ENCODE measurements at regions of chr13 and their contacts with region 1.

Region 1: GRCh38 chr13:95660981-95661581 is 15.9 kb upstream of the DNAJC3 start:
- DNase-seq: peak; percentile 51
- ATAC-seq: peak; percentile 34; the same call in 1 of the 3 replicates
- H3K4me3 ChIP-seq: no peak overlapping the region
- H3K27ac ChIP-seq: no peak overlapping the region
- H3K4me1 ChIP-seq: no peaks in the 10 kb centered on the region
- H3K27me3 ChIP-seq: no peaks in the 10 kb centered on the region; a peak in 1 of 5 replicates
- CTCF ChIP-seq: peak; percentile 53
- EP300 ChIP-seq: no peak
- POLR2A ChIP-seq: no peak
- RAD21 ChIP-seq: no peak

Region 2: GRCh38 chr13:95150555-95150954 is 510.5 kb before region 1 on chr13:
- CTCF ChIA-PET with region 1: no interaction called
- POLR2A ChIA-PET with region 1: no interaction called
- in situ Hi-C with region 1: no loop called
- intact Hi-C with region 1: no loop called
- DNase-seq: peak; percentile 7
- ATAC-seq: peak; percentile 60
- H3K4me3 ChIP-seq: no peak overlapping the region
- H3K27ac ChIP-seq: no peak overlapping the region
- H3K4me1 ChIP-seq: peaks cover 29% of the 10 kb centered on the region
- H3K27me3 ChIP-seq: no peaks in the 10 kb centered on the region
- CTCF ChIP-seq: no peak
- EP300 ChIP-seq: no peak
- POLR2A ChIP-seq: no peak
- RAD21 ChIP-seq: no peak

Region 3: DNA sequence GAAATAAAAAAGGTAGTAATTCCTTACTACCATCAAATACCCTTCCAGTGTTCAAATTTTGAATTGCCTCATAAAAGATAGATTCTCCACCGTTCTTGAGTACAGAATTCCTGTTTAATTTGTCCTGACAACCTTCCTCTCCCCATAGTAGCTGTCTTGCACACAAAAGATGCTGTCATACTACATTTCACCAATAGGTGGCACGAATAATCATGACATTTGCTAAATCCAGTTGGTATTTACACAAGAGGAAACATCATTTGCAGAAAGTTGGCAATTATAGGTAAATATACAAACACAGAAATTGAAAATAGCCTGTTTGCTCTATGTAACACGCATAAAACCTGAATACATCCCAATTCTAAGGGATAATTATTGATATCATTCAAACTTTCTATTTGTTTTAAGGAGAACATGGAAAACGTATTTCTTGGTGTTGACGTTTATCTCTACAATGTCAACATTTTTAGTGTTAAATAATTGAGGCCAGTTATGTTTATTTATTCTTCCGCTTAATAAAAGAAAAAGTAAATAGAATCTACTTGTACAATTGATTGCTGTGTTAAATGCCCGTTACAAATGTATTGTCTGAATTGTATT is 166.9 kb before region 1 on chr13:
- CTCF ChIA-PET with region 1: interaction called, 3 read pairs
- POLR2A ChIA-PET with region 1: no interaction called
- in situ Hi-C with region 1: no loop called
- intact Hi-C with region 1: loop called (anchors 1 kb)
- DNase-seq: peak; percentile 55
- ATAC-seq: peak; percentile 70
- H3K4me3 ChIP-seq: no peak overlapping the region
- H3K27ac ChIP-seq: no peak overlapping the region
- H3K4me1 ChIP-seq: no peaks in the 10 kb centered on the region
- H3K27me3 ChIP-seq: no peaks in the 10 kb centered on the region
- CTCF ChIP-seq: peak; percentile 68
- EP300 ChIP-seq: no peak
- POLR2A ChIP-seq: no peak
- RAD21 ChIP-seq: peak; percentile 28; the same call in 1 of the 2 replicates

Region 4: DNA sequence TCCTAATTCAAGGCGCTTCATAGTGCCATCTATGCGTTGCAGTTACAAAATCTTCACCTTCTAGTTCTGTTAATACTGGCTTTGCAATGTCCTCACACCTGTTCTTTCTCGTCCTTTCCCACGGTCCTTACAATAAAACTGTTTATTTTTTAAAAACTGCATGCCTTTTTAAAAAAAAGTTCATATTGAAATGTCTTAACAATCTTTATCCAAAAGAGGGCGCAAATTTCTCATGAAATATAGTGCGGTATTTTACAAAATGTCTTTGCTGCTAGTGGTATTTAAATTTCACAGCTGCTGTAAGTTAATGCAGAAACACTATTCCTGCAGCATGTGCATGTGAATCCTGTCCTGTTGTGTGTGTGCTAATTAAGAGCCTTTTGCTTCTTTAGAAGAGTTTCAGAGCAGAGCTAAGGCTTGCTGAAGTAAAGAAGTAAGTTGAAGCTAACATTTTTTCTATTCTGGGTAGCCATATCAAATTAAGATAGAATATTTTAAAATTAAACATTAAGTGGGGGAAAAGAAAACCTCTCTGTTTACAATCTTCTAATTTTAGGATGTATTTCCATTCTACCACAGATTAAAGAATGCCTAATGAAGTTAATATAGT is 124.3 kb before region 1 on chr13:
- CTCF ChIA-PET with region 1: no interaction called
- POLR2A ChIA-PET with region 1: no interaction called
- in situ Hi-C with region 1: no loop called
- intact Hi-C with region 1: loop called (anchors 5 kb)
- DNase-seq: no peak
- ATAC-seq: no peak
- H3K4me3 ChIP-seq: no peak overlapping the region
- H3K27ac ChIP-seq: no peak overlapping the region
- H3K4me1 ChIP-seq: peaks cover 31% of the 10 kb centered on the region
- H3K27me3 ChIP-seq: no peaks in the 10 kb centered on the region
- CTCF ChIP-seq: peak; percentile 39
- EP300 ChIP-seq: no peak
- POLR2A ChIP-seq: no peak
- RAD21 ChIP-seq: no peak

Region 5: DNA sequence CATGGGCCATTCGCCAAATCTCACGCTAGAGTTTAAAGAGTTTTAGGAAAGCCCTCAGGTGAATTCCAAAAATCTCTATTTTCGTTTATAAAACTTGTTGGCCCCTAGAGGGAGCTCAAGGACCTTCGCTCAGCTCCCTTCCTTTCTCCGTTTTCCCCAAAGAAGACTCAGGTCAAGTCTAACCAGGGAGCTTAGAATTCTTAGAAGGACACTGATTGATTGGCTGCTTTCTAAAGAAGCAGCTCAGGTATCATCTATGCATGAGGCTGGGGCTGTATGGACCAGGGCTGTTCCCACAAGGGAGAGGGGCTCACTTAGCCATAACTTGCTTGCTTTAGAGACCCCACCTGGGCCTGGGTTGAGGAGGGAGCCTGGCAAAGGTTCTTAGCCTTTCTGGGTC is 37.1 kb before region 1 on chr13:
- CTCF ChIA-PET with region 1: interaction called, 11 read pairs
- POLR2A ChIA-PET with region 1: no interaction called
- in situ Hi-C with region 1: no loop called
- intact Hi-C with region 1: loop called (anchors 1 kb)
- DNase-seq: peak; percentile 29
- ATAC-seq: peak; percentile 71
- H3K4me3 ChIP-seq: no peak overlapping the region
- H3K27ac ChIP-seq: no peak overlapping the region
- H3K4me1 ChIP-seq: no peaks in the 10 kb centered on the region
- H3K27me3 ChIP-seq: no peaks in the 10 kb centered on the region
- CTCF ChIP-seq: peak; percentile 69
- EP300 ChIP-seq: no peak
- POLR2A ChIP-seq: no peak
- RAD21 ChIP-seq: no peak

Region 6: GRCh38 chr13:95987841-95988240 is 326.8 kb after region 1 on chr13:
- CTCF ChIA-PET with region 1: no interaction called
- POLR2A ChIA-PET with region 1: no interaction called
- in situ Hi-C with region 1: no loop called
- intact Hi-C with region 1: no loop called
- DNase-seq: no peak
- ATAC-seq: no peak
- H3K4me3 ChIP-seq: no peak overlapping the region
- H3K27ac ChIP-seq: no peak overlapping the region
- H3K4me1 ChIP-seq: no peaks in the 10 kb centered on the region
- H3K27me3 ChIP-seq: no peaks in the 10 kb centered on the region; a peak in 1 of 5 replicates
- CTCF ChIP-seq: no peak
- EP300 ChIP-seq: no peak
- POLR2A ChIP-seq: no peak
- RAD21 ChIP-seq: no peak